ENCODE measurements at regions of chr16 and their contacts with region 1.

Region 1: DNA sequence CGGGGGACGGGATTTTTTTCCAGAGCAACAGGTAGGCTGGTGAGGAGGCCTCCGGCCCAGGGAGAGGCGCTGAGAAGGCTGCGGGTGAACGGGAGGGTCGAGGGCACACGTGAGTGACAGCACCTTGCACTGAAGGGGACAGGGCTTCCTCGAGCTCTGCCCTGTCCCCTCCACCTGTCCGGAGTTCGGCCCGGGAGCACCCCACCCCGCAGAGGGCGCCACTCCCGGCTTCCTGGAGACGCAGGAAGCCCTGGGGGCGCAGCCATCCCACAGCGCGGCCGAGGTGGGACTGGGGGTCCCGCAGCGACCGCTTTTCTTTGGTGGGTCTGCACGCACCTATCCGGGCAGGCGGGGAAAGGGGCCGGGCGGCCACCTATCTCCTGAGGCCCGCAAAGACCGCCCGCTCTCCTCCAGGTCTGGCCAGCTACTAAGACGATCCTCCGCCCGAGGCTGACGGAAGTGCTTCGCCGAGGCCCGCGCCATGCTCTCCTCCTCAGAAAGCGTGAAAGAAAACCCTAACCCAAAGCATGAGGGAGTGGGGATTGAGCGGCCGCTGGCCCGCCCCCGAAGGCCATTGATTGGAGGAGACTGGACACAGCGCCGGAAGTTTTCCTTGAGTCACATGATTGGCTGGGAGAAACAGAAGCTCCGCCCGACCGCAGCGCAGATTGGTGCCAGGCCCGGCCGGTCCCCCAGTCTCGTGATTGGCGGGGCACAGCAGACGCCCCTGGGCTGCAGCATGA is 34.3 kb downstream of the DDX19A start:
- DNase-seq: peak; percentile 91 to 98 (median 94)
- ATAC-seq: peak; percentile 90
- H3K4me3 ChIP-seq: peak overlapping the region; percentile 68
- H3K4me3 Mint-ChIP-seq: peak overlapping the region; percentile 98
- H3K27ac ChIP-seq: peak overlapping the region; percentile 64 to 79
- H3K27ac Mint-ChIP-seq: peak overlapping the region; percentile 92
- H3K4me1 ChIP-seq: peaks cover 32% of the 10 kb centered on the region
- H3K4me1 Mint-ChIP-seq: peaks cover 25% of the 10 kb centered on the region
- H3K27me3 ChIP-seq: no peaks in the 10 kb centered on the region
- H3K27me3 Mint-ChIP-seq: no peaks in the 10 kb centered on the region
- CTCF ChIP-seq: peak; percentile 38

Region 2: DNA sequence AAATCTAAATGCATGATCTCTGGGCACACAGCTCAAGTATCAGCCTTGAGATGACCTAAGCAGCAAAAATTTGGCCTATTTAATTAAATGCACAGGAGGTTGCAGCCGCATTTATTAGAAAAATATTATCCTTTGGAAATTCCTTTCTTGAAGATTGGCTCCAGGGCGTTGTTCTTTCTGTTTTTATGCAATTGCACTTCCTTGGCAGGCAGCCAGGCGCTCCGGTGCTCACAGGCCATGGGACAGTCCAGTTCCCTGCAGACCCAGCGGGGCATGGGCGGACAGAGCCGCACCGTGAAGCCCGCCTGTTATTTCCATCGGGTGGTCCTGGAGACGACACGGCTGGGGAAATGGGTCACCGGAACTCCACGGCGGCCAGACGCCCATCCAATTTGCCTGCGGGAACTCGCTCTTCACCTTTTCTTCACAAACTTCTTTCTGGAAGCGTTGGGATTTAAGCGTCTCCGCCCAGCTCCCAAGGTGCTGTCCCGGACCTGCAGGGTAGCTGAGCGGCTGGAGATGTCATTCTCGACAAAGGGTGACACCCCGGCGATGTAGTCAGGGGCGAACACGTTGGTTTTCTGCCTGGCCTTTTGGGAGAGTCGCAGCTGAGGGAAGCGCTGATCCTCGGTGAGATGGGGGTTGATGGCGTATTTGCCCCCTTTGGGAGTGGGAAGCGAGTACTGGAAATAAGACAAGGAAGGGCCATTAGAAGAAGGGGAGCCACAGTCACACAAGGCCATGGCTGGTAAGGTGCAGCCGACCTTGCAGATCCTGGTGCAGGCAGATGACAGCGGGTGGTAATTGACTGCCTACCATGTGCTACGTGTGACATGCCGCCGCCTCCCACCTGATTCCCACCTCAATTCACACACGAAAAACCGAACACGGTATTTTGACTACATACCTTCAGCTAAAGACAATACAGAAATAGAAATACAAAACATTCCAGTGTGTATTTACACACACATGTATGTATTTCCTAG is 638.8 kb before region 1 on chr16:
- CTCF ChIA-PET with region 1: no interaction called
- POLR2A ChIA-PET with region 1: no interaction called
- intact Hi-C with region 1: no loop called
- DNase-seq: no peak
- ATAC-seq: no peak
- H3K4me3 ChIP-seq: no peak overlapping the region
- H3K4me3 Mint-ChIP-seq: no peak overlapping the region
- H3K27ac ChIP-seq: no peak overlapping the region
- H3K27ac Mint-ChIP-seq: no peak overlapping the region
- H3K4me1 ChIP-seq: no peaks in the 10 kb centered on the region
- H3K4me1 Mint-ChIP-seq: no peaks in the 10 kb centered on the region
- H3K27me3 ChIP-seq: no peaks in the 10 kb centered on the region
- H3K27me3 Mint-ChIP-seq: no peaks in the 10 kb centered on the region
- CTCF ChIP-seq: no peak

Region 3: GRCh38 chr16:70289229-70290098 is 91.6 kb before region 1 on chr16 and contains the start of gene AARS1:
- CTCF ChIA-PET with region 1: no interaction called
- POLR2A ChIA-PET with region 1: interaction called, 21 read pairs
- intact Hi-C with region 1: no loop called
- DNase-seq: peak; percentile 86 to 99 (median 90)
- ATAC-seq: peak; percentile 94
- H3K4me3 ChIP-seq: peak within 1 kb of the TSS; percentile 95
- H3K4me3 Mint-ChIP-seq: peak within 1 kb of the TSS; percentile 96
- H3K27ac ChIP-seq: peak within 1 kb of the TSS; percentile 74 to 86
- H3K27ac Mint-ChIP-seq: peak within 1 kb of the TSS; percentile 91
- H3K4me1 ChIP-seq: peaks cover 22% of the 10 kb centered on the region
- H3K4me1 Mint-ChIP-seq: peaks cover 21% of the 10 kb centered on the region
- H3K27me3 ChIP-seq: no peaks in the 10 kb centered on the region
- H3K27me3 Mint-ChIP-seq: no peaks in the 10 kb centered on the region
- CTCF ChIP-seq: no peak
- total RNA-seq, gene AARS1: 10.3 to 11.1 TPM

Region 4: GRCh38 chr16:70342016-70342415 is 39.0 kb before region 1 on chr16:
- CTCF ChIA-PET with region 1: interaction called, 3 read pairs
- POLR2A ChIA-PET with region 1: interaction called, 62 read pairs
- intact Hi-C with region 1: loop called (anchors 2 kb)
- DNase-seq: no peak
- ATAC-seq: no peak
- H3K4me3 ChIP-seq: no peak overlapping the region
- H3K4me3 Mint-ChIP-seq: no peak overlapping the region
- H3K27ac ChIP-seq: no peak overlapping the region
- H3K27ac Mint-ChIP-seq: no peak overlapping the region
- H3K4me1 ChIP-seq: peaks cover 13% of the 10 kb centered on the region
- H3K4me1 Mint-ChIP-seq: peaks cover 13% of the 10 kb centered on the region
- H3K27me3 ChIP-seq: no peaks in the 10 kb centered on the region
- H3K27me3 Mint-ChIP-seq: no peaks in the 10 kb centered on the region
- CTCF ChIP-seq: no peak

Region 5: GRCh38 chr16:70402916-70403659 is 22.1 kb after region 1 on chr16:
- CTCF ChIA-PET with region 1: no interaction called
- POLR2A ChIA-PET with region 1: interaction called, 24 read pairs
- intact Hi-C with region 1: loop called in 1 of 2 experiments (anchors 2 kb)
- DNase-seq: no peak
- ATAC-seq: no peak
- H3K4me3 ChIP-seq: no peak overlapping the region
- H3K4me3 Mint-ChIP-seq: peak overlapping the region; percentile 55
- H3K27ac ChIP-seq: no peak overlapping the region
- H3K27ac Mint-ChIP-seq: peak overlapping the region; percentile 75
- H3K4me1 ChIP-seq: peaks cover 50% of the 10 kb centered on the region
- H3K4me1 Mint-ChIP-seq: peaks cover 57% of the 10 kb centered on the region
- H3K27me3 ChIP-seq: no peaks in the 10 kb centered on the region
- H3K27me3 Mint-ChIP-seq: no peaks in the 10 kb centered on the region
- CTCF ChIP-seq: no peak

Region 6: GRCh38 chr16:70430667-70431536 is 49.9 kb after region 1 on chr16:
- CTCF ChIA-PET with region 1: no interaction called
- POLR2A ChIA-PET with region 1: interaction called, 21 read pairs
- intact Hi-C with region 1: loop called in 1 of 2 experiments (anchors 2 kb)
- DNase-seq: peak in 13 of 14 experiments; percentile 26 to 89 (median 51)
- ATAC-seq: peak; percentile 88
- H3K4me3 ChIP-seq: no peak overlapping the region
- H3K4me3 Mint-ChIP-seq: peak overlapping the region; percentile 61
- H3K27ac ChIP-seq: peak overlapping the region; percentile 73 to 79
- H3K27ac Mint-ChIP-seq: peak overlapping the region; percentile 86
- H3K4me1 ChIP-seq: peaks cover 66% of the 10 kb centered on the region
- H3K4me1 Mint-ChIP-seq: peaks cover 69% of the 10 kb centered on the region
- H3K27me3 ChIP-seq: no peaks in the 10 kb centered on the region
- H3K27me3 Mint-ChIP-seq: no peaks in the 10 kb centered on the region
- CTCF ChIP-seq: no peak

Region 7: DNA sequence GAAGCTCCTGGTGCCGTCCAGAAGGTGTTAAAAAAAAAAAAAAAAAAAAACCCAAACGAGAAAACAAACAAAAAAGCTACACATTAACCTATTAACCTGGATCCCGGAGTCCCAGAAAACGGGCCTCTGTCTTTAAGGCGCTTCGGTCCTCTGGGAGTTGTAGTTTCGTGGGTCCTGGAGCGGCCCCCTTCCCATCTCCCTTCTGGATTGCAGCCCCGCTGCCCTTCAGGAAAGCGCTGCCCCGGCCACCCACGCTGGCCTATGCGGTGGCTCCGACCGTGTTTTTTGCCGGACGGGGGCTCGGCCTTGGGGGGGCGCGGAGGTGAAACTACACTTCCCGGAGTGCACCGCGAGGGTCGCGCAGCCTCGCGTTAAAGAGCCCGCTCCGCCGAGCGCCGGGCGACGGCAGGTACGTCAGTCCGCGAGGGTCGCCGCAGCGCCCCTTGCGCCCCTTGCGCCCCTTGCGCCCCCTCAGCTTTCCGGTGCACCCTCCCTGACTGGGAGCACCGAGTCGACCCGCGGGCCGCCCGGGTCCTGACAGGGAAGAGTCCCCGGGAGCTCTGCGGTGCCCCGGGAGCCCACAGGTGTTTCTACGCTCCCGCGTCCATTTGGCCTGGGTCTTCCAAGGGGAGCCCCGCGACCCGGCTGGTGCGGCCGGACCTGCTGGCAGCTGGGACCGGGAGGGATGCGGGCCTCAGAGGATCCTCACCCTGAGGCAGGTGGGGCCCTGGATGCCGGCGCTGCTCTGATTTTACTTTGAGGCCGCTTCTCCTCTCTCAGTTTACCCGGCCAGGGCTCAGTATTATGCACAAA is 73.4 kb after region 1 on chr16 and contains the start of gene FCSK:
- CTCF ChIA-PET with region 1: interaction called, 4 read pairs
- POLR2A ChIA-PET with region 1: interaction called, 54 read pairs
- intact Hi-C with region 1: loop called (anchors 1 to 2 kb)
- DNase-seq: peak; percentile 50 to 85 (median 59)
- ATAC-seq: peak; percentile 91
- H3K4me3 ChIP-seq: peak within 1 kb of the TSS; percentile 93
- H3K4me3 Mint-ChIP-seq: peak within 1 kb of the TSS; percentile 90
- H3K27ac ChIP-seq: peak within 1 kb of the TSS; percentile 89 to 95
- H3K27ac Mint-ChIP-seq: peak within 1 kb of the TSS; percentile 61
- H3K4me1 ChIP-seq: peaks cover 21% of the 10 kb centered on the region
- H3K4me1 Mint-ChIP-seq: peaks cover 23% of the 10 kb centered on the region
- H3K27me3 ChIP-seq: no peaks in the 10 kb centered on the region
- H3K27me3 Mint-ChIP-seq: no peaks in the 10 kb centered on the region
- CTCF ChIP-seq: no peak
- total RNA-seq, gene FCSK: 21.8 to 25.4 TPM